GM12878 (cell line): ENCODE measurements at regions of chr6 and their contacts with region 1.

Region 1: GRCh38 chr6:55617272-55617671 is 38.3 kb upstream of the HMGCLL1 start:
- DNase-seq: no peak
- ATAC-seq: peak; percentile 88
- H3K4me3 ChIP-seq: no peak overlapping the region
- H3K27ac ChIP-seq: no peak overlapping the region
- H3K4me1 ChIP-seq: no peaks in the 10 kb centered on the region
- H3K27me3 ChIP-seq: no peaks in the 10 kb centered on the region
- CTCF ChIP-seq: peak; percentile 49 to 56 (median 53); a peak in 4 of 6 replicates
- EP300 ChIP-seq: no peak
- POLR2A ChIP-seq: no peak
- RAD21 ChIP-seq: peak; percentile 58

Region 2: GRCh38 chr6:55069132-55069781 is 548.0 kb before region 1 on chr6:
- CTCF ChIA-PET with region 1: no interaction called
- POLR2A ChIA-PET with region 1: no interaction called
- RAD21 ChIA-PET with region 1: no interaction called
- SMC1A ChIA-PET with region 1: no interaction called
- in situ Hi-C with region 1: no loop called
- intact Hi-C with region 1: no loop called
- DNase-seq: no peak
- ATAC-seq: peak; percentile 58
- H3K4me3 ChIP-seq: no peak overlapping the region
- H3K27ac ChIP-seq: no peak overlapping the region
- H3K4me1 ChIP-seq: no peaks in the 10 kb centered on the region
- H3K27me3 ChIP-seq: no peaks in the 10 kb centered on the region
- CTCF ChIP-seq: peak; percentile 50 to 57 (median 54); a peak in 5 of 6 replicates
- EP300 ChIP-seq: no peak
- POLR2A ChIP-seq: no peak
- RAD21 ChIP-seq: peak; percentile 87

Region 3: GRCh38 chr6:55601120-55601519 is 16.2 kb before region 1 on chr6:
- CTCF ChIA-PET with region 1: no interaction called
- POLR2A ChIA-PET with region 1: no interaction called
- RAD21 ChIA-PET with region 1: no interaction called
- SMC1A ChIA-PET with region 1: no interaction called
- in situ Hi-C with region 1: no loop called
- intact Hi-C with region 1: no loop called
- DNase-seq: no peak
- ATAC-seq: no peak
- H3K4me3 ChIP-seq: no peak overlapping the region
- H3K27ac ChIP-seq: no peak overlapping the region
- H3K4me1 ChIP-seq: no peaks in the 10 kb centered on the region
- H3K27me3 ChIP-seq: no peaks in the 10 kb centered on the region
- CTCF ChIP-seq: no peak
- EP300 ChIP-seq: no peak
- POLR2A ChIP-seq: no peak
- RAD21 ChIP-seq: no peak

Region 4: GRCh38 chr6:55636405-55637102 is 19.3 kb after region 1 on chr6:
- CTCF ChIA-PET with region 1: interaction called, 13 read pairs
- POLR2A ChIA-PET with region 1: no interaction called
- RAD21 ChIA-PET with region 1: no interaction called
- SMC1A ChIA-PET with region 1: no interaction called
- in situ Hi-C with region 1: no loop called
- intact Hi-C with region 1: no loop called
- DNase-seq: no peak
- ATAC-seq: no peak
- H3K4me3 ChIP-seq: no peak overlapping the region
- H3K27ac ChIP-seq: no peak overlapping the region
- H3K4me1 ChIP-seq: no peaks in the 10 kb centered on the region
- H3K27me3 ChIP-seq: no peaks in the 10 kb centered on the region
- CTCF ChIP-seq: no peak
- EP300 ChIP-seq: no peak
- POLR2A ChIP-seq: no peak
- RAD21 ChIP-seq: no peak

Region 5: GRCh38 chr6:55652429-55652828 is 35.2 kb after region 1 on chr6:
- CTCF ChIA-PET with region 1: no interaction called
- POLR2A ChIA-PET with region 1: no interaction called
- RAD21 ChIA-PET with region 1: no interaction called
- SMC1A ChIA-PET with region 1: no interaction called
- in situ Hi-C with region 1: no loop called
- intact Hi-C with region 1: no loop called
- DNase-seq: no peak
- ATAC-seq: no peak
- H3K4me3 ChIP-seq: no peak overlapping the region
- H3K27ac ChIP-seq: no peak overlapping the region
- H3K4me1 ChIP-seq: no peaks in the 10 kb centered on the region
- H3K27me3 ChIP-seq: no peaks in the 10 kb centered on the region
- CTCF ChIP-seq: no peak
- EP300 ChIP-seq: no peak
- POLR2A ChIP-seq: no peak
- RAD21 ChIP-seq: no peak

Region 6: GRCh38 chr6:55886185-55886836 is 269.0 kb after region 1 on chr6:
- CTCF ChIA-PET with region 1: interaction called, 36 read pairs
- POLR2A ChIA-PET with region 1: no interaction called
- RAD21 ChIA-PET with region 1: interaction called, 3 read pairs
- SMC1A ChIA-PET with region 1: interaction called, 5 read pairs
- in situ Hi-C with region 1: loop called (anchors 10 kb)
- intact Hi-C with region 1: loop called (anchors 1 kb)
- DNase-seq: no peak
- ATAC-seq: no peak
- H3K4me3 ChIP-seq: no peak overlapping the region
- H3K27ac ChIP-seq: no peak overlapping the region
- H3K4me1 ChIP-seq: no peaks in the 10 kb centered on the region
- H3K27me3 ChIP-seq: no peaks in the 10 kb centered on the region
- CTCF ChIP-seq: peak in 2 of 3 experiments; percentile 2 to 17; a peak in 2 of 6 replicates
- EP300 ChIP-seq: no peak
- POLR2A ChIP-seq: no peak
- RAD21 ChIP-seq: peak; percentile 60

Region 7: DNA sequence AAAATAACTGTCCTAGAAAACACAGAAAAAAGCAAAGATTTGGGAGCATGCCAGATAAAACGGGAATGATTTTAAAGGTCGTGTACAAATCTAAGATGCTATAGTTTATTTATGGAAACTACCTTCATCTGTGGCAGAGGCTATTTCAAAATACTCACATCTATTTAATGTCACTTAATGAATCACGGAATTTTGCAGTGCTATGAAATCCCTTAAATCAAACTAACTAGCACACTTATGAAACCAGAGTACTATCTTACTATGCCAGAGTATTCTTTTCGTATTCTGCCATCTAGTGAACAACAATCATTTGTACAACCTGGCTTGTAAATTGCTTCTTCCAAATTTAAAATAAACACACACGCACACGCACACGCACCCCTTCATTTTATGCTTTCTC is 336.1 kb after region 1 on chr6:
- CTCF ChIA-PET with region 1: interaction called, 7 read pairs
- POLR2A ChIA-PET with region 1: no interaction called
- RAD21 ChIA-PET with region 1: interaction called, 3 read pairs
- SMC1A ChIA-PET with region 1: interaction called, 3 read pairs
- in situ Hi-C with region 1: no loop called
- intact Hi-C with region 1: loop called (anchors 2 kb)
- DNase-seq: no peak
- ATAC-seq: no peak
- H3K4me3 ChIP-seq: no peak overlapping the region
- H3K27ac ChIP-seq: no peak overlapping the region
- H3K4me1 ChIP-seq: no peaks in the 10 kb centered on the region
- H3K27me3 ChIP-seq: no peaks in the 10 kb centered on the region
- CTCF ChIP-seq: peak in 1 of 3 experiments; percentile 33; a peak in 1 of 6 replicates
- EP300 ChIP-seq: no peak
- POLR2A ChIP-seq: no peak
- RAD21 ChIP-seq: 0 out of 2 replicates have a peak, but pooled peaks have one; percentile 22

Region 8: DNA sequence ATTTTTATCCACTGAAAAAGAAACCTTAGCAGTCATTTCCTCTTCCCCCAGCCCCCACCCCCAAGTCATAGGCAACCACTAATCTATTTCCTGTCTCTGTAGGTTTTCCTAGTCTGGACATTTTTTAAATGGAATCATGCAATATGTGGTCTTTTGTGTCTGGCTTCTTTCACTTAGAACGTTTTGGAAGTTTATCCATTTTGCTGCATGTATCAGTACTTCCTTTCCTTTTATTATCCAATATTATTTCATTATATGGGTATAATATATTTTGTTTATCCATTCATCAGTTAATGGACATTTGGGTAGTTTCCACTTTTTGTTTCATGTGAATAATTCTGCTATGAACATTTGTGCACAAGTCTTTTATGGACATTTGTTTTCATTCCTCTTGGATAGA is 357.4 kb after region 1 on chr6:
- CTCF ChIA-PET with region 1: no interaction called
- POLR2A ChIA-PET with region 1: no interaction called
- RAD21 ChIA-PET with region 1: no interaction called
- SMC1A ChIA-PET with region 1: no interaction called
- in situ Hi-C with region 1: no loop called
- intact Hi-C with region 1: no loop called
- DNase-seq: no peak
- ATAC-seq: no peak
- H3K4me3 ChIP-seq: no peak overlapping the region
- H3K27ac ChIP-seq: no peak overlapping the region
- H3K4me1 ChIP-seq: no peaks in the 10 kb centered on the region
- H3K27me3 ChIP-seq: no peaks in the 10 kb centered on the region
- CTCF ChIP-seq: no peak
- EP300 ChIP-seq: no peak
- POLR2A ChIP-seq: no peak
- RAD21 ChIP-seq: no peak